Caco-2 (cell line): ENCODE measurements at regions of chrX and their contacts with region 1.

Region 1: DNA sequence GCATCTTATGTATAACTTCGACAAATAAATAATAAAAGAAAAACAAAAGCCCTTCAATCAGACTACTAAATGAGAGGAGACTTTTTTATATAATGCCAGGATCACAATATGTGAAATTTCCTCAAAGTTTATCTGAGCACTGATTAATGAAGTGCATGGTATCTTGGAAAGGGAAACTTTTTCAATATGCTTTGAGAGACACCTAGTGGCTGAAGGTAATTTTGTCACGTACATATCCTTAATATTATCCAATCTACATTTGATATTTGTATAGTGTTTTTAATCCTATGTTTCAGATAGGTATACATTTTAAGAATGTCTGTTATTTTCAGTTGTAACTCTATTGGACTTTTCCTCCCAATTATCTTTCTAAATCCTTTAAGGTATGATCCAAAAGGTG is 146.8 kb downstream of the KLHL4 start:
- DNase-seq: no peak
- H3K4me3 ChIP-seq: no peak overlapping the region
- H3K4me3 Mint-ChIP-seq: no peak overlapping the region
- H3K27ac Mint-ChIP-seq: no peak overlapping the region
- H3K4me1 ChIP-seq: no peaks in the 10 kb centered on the region
- H3K4me1 Mint-ChIP-seq: no peaks in the 10 kb centered on the region
- H3K27me3 ChIP-seq: no peaks in the 10 kb centered on the region
- H3K27me3 Mint-ChIP-seq: no peaks in the 10 kb centered on the region
- CTCF ChIP-seq: no peak

Region 2: DNA sequence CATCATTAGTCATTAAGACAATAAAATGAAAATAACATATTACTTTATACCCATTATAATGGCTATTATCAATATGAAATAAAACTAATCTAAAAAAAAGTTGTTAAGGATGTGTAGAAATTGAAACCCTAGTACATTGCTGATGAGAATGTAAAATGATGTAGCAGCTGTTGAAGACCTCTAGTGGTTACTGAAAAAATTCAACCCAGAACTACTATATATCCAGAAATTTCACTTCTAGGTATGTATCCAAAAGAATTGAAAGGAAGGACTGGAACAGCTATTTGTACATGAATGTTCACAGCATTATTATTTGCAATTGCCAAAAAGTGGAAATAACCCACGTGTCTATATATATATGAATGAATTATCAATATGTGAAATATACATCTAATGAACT is 327.1 kb before region 1 on chrX:
- CTCF ChIA-PET with region 1: no interaction called
- POLR2A ChIA-PET with region 1: no interaction called
- intact Hi-C with region 1: loop called (anchors 2 kb)
- DNase-seq: no peak
- H3K4me3 ChIP-seq: no peak overlapping the region
- H3K4me3 Mint-ChIP-seq: no peak overlapping the region
- H3K27ac Mint-ChIP-seq: no peak overlapping the region
- H3K4me1 ChIP-seq: no peaks in the 10 kb centered on the region
- H3K4me1 Mint-ChIP-seq: no peaks in the 10 kb centered on the region
- H3K27me3 ChIP-seq: no peaks in the 10 kb centered on the region
- H3K27me3 Mint-ChIP-seq: peaks cover 3% of the 10 kb centered on the region
- CTCF ChIP-seq: no peak

Region 3: DNA sequence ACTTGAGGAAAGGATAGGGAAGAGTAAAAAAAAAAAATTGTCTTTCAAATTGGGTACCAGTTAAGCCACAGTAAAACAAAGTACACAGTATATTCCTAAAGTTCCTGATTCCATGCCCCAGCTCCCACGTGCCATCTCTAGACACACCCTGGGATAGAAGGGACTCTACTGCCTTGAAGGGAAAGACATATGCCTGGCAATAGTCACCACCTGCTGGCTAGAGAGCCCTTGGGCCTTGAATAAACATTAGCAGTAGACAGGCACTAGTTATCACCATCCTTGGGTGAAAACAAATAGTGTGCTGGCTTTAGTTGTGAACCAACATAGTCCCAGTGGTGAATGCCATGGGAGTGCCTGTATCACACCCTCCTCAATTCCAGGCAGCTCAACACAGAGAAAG is 101.9 kb before region 1 on chrX:
- CTCF ChIA-PET with region 1: no interaction called
- POLR2A ChIA-PET with region 1: no interaction called
- intact Hi-C with region 1: no loop called
- DNase-seq: no peak
- H3K4me3 ChIP-seq: no peak overlapping the region
- H3K4me3 Mint-ChIP-seq: no peak overlapping the region
- H3K27ac Mint-ChIP-seq: no peak overlapping the region
- H3K4me1 ChIP-seq: no peaks in the 10 kb centered on the region
- H3K4me1 Mint-ChIP-seq: no peaks in the 10 kb centered on the region
- H3K27me3 ChIP-seq: no peaks in the 10 kb centered on the region
- H3K27me3 Mint-ChIP-seq: no peaks in the 10 kb centered on the region
- CTCF ChIP-seq: no peak

Region 4: DNA sequence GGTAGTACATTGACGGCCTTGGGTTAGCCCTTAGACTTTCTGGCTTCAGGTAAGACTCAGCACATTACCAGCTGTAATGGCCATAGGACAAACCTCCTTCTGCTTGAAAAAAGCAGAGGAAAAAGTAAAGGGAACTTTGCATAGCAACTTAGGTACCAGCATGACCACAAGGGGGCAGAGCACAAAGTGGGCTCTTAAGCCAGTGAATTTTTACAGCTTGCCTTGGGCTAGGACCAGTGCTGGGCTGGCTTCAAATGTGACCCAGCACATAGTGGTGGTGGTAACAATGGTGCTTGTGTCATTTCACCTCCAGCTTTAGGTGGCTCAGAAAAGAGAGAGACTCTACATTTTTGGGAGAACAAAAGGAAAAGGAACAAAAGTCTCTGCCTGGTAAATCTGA is 80.7 kb before region 1 on chrX:
- CTCF ChIA-PET with region 1: no interaction called
- POLR2A ChIA-PET with region 1: no interaction called
- intact Hi-C with region 1: loop called (anchors 1 kb)
- DNase-seq: peak in 1 of 2 experiments; percentile 10
- H3K4me3 ChIP-seq: no peak overlapping the region
- H3K4me3 Mint-ChIP-seq: no peak overlapping the region
- H3K27ac Mint-ChIP-seq: no peak overlapping the region
- H3K4me1 ChIP-seq: no peaks in the 10 kb centered on the region
- H3K4me1 Mint-ChIP-seq: no peaks in the 10 kb centered on the region
- H3K27me3 ChIP-seq: no peaks in the 10 kb centered on the region
- H3K27me3 Mint-ChIP-seq: no peaks in the 10 kb centered on the region
- CTCF ChIP-seq: peak; percentile 26 to 35

Region 5: GRCh38 chrX:87710580-87710979 is 46.2 kb after region 1 on chrX:
- CTCF ChIA-PET with region 1: no interaction called
- POLR2A ChIA-PET with region 1: no interaction called
- intact Hi-C with region 1: no loop called
- DNase-seq: no peak
- H3K4me3 ChIP-seq: no peak overlapping the region
- H3K4me3 Mint-ChIP-seq: no peak overlapping the region
- H3K27ac Mint-ChIP-seq: no peak overlapping the region
- H3K4me1 ChIP-seq: no peaks in the 10 kb centered on the region
- H3K4me1 Mint-ChIP-seq: no peaks in the 10 kb centered on the region
- H3K27me3 ChIP-seq: no peaks in the 10 kb centered on the region
- H3K27me3 Mint-ChIP-seq: no peaks in the 10 kb centered on the region
- CTCF ChIP-seq: no peak